ENCODE measurements at regions of chr2 and their contacts with region 1.

Region 1: GRCh38 chr2:182977463-182977862 is 60.8 kb downstream of the NCKAP1 start:
- DNase-seq: no peak
- ATAC-seq: no peak
- H3K4me3 ChIP-seq: no peak overlapping the region
- H3K27ac ChIP-seq: no peak overlapping the region
- H3K4me1 ChIP-seq: no peaks in the 10 kb centered on the region
- H3K27me3 ChIP-seq: no peaks in the 10 kb centered on the region
- CTCF ChIP-seq: no peak

Region 2: GRCh38 chr2:182763311-182763912 is 214.1 kb before region 1 on chr2:
- intact Hi-C with region 1: loop called in 1 of 3 experiments (anchors 10 kb)
- DNase-seq: peak in 1 of 6 donors; percentile 26
- ATAC-seq: peak; percentile 35 to 78 (median 78)
- H3K4me3 ChIP-seq: no peak overlapping the region
- H3K27ac ChIP-seq: no peak overlapping the region
- H3K4me1 ChIP-seq: no peaks in the 10 kb centered on the region
- H3K27me3 ChIP-seq: no peaks in the 10 kb centered on the region
- CTCF ChIP-seq: peak; percentile 6 to 49 (median 37)

Region 3: GRCh38 chr2:182933629-182934028 is 43.8 kb before region 1 on chr2:
- intact Hi-C with region 1: no loop called
- DNase-seq: no peak
- ATAC-seq: no peak
- H3K4me3 ChIP-seq: no peak overlapping the region
- H3K27ac ChIP-seq: no peak overlapping the region
- H3K4me1 ChIP-seq: no peaks in the 10 kb centered on the region
- H3K27me3 ChIP-seq: no peaks in the 10 kb centered on the region
- CTCF ChIP-seq: no peak

Measured in pancreas (tissue), 10 donors.